PC-3 (cell line): ENCODE measurements at regions of chr16 and their contacts with region 1.

Region 1: GRCh38 chr16:2905431-2906387 is 6.0 kb upstream of the FLYWCH1 start:
- DNase-seq: peak; percentile 97
- ATAC-seq: peak; percentile 76
- H3K4me3 ChIP-seq: peak overlapping the region; percentile 87
- H3K27ac ChIP-seq: no peak overlapping the region
- H3K4me1 ChIP-seq: peaks cover 15% of the 10 kb centered on the region
- H3K27me3 ChIP-seq: no peaks in the 10 kb centered on the region
- CTCF ChIP-seq: no peak

Region 2: GRCh38 chr16:2883027-2883851 is 22.5 kb before region 1 on chr16 and contains the start of gene FLYWCH2:
- CTCF ChIA-PET with region 1: no interaction called
- POLR2A ChIA-PET with region 1: interaction called, 4 read pairs
- intact Hi-C with region 1: loop called (anchors 2 kb)
- DNase-seq: peak; percentile 92
- ATAC-seq: peak; percentile 68
- H3K4me3 ChIP-seq: peak within 1 kb of the TSS; percentile 90
- H3K27ac ChIP-seq: peak within 1 kb of the TSS; percentile 67
- H3K4me1 ChIP-seq: peaks cover 5% of the 10 kb centered on the region; the same call in 1 of the 2 replicates
- H3K27me3 ChIP-seq: no peaks in the 10 kb centered on the region
- CTCF ChIP-seq: no peak
- total RNA-seq, gene FLYWCH2: 92.0 and 100 TPM in 2 replicates

Region 3: GRCh38 chr16:2919511-2920255 is 14.0 kb after region 1 on chr16:
- CTCF ChIA-PET with region 1: interaction called, 3 read pairs
- POLR2A ChIA-PET with region 1: no interaction called
- intact Hi-C with region 1: loop called (anchors 1 kb)
- DNase-seq: peak; percentile 74
- ATAC-seq: no peak
- H3K4me3 ChIP-seq: no peak overlapping the region
- H3K27ac ChIP-seq: no peak overlapping the region
- H3K4me1 ChIP-seq: peaks cover 11% of the 10 kb centered on the region
- H3K27me3 ChIP-seq: no peaks in the 10 kb centered on the region
- CTCF ChIP-seq: peak; percentile 85

Region 4: DNA sequence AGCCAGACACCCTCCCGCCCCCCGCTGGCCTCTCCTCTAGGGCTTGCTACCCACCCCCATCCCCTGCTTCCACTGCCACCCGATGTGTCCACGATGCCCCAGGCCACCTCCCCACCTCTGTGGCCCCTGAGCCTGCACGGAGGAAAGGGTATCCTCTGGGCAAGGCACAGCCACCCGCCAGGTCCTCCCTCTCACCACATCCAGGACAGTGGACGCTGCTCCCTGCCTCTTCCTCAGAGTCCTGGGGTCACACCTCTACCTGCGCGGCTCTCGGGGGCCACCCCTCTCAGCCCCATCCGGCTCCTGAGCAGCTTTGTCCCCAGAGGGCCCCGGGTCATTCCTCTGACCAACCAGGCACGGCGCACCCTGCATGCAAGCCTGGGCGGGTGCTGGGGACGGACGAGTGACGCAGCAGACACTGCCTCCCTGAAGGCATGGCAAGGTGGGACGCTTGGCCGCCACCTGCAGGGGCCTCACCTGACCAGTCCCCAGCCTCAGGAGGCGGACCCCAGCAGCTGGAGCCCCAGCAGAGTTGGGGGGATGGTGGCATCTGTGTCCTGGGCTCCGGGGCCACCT is 30.8 kb after region 1 on chr16:
- CTCF ChIA-PET with region 1: no interaction called
- POLR2A ChIA-PET with region 1: no interaction called
- intact Hi-C with region 1: no loop called
- DNase-seq: no peak
- ATAC-seq: no peak
- H3K4me3 ChIP-seq: no peak overlapping the region
- H3K27ac ChIP-seq: no peak overlapping the region
- H3K4me1 ChIP-seq: no peaks in the 10 kb centered on the region
- H3K27me3 ChIP-seq: no peaks in the 10 kb centered on the region
- CTCF ChIP-seq: no peak

Region 5: DNA sequence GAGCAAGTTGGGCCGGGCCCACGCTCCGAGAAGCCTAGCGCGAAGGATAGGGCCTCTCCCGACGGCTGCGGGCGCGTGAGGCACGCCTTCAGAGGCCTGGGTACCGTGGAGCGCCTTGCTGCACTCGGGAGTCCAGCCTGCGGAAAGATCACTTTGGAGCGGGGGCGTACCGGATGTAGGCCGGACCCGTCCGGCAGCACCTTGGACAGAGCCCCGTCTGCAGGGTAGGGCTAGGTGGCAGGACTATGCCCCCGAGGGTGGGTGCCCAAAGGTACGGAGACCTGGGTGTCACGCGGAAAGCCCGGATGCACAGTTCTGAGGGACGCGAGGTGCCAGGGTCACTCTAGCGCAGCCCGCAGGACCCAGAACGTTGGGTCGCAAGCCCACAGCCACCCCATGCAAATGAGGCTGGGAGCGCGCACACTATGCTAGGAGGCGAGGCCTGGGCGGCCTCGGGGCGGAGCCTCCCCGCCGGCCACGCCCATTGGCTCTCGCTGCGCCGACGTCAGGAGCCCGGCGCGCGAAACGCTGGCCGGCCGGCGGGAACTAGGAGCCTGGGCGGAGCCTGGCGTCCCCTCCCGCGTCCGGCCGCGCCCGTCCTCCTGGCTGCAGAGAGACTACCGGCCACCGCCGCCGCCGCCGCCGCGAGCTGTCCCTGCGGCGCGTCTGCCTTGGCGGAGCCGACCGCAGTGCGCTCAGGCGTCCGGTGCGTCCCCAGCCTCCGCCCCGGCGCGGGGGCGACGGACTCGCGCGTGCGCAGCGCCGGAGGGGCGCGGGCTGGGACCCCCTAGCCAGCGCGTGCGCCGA is 63.2 kb after region 1 on chr16 and contains the start of gene PAQR4:
- CTCF ChIA-PET with region 1: no interaction called
- POLR2A ChIA-PET with region 1: no interaction called
- intact Hi-C with region 1: loop called (anchors 10 kb)
- DNase-seq: peak; percentile 92
- ATAC-seq: peak; percentile 72
- H3K4me3 ChIP-seq: peak within 1 kb of the TSS; percentile 85
- H3K27ac ChIP-seq: peak within 1 kb of the TSS; percentile 43
- H3K4me1 ChIP-seq: peaks cover 22% of the 10 kb centered on the region; the same call in 1 of the 2 replicates
- H3K27me3 ChIP-seq: no peaks in the 10 kb centered on the region
- CTCF ChIP-seq: no peak
- total RNA-seq, gene PAQR4: 37.9 and 45.0 TPM in 2 replicates

Region 6: GRCh38 chr16:3198334-3199072 is 292.8 kb after region 1 on chr16:
- CTCF ChIA-PET with region 1: no interaction called
- POLR2A ChIA-PET with region 1: no interaction called
- intact Hi-C with region 1: no loop called
- DNase-seq: no peak
- ATAC-seq: no peak
- H3K4me3 ChIP-seq: no peak overlapping the region
- H3K27ac ChIP-seq: no peak overlapping the region
- H3K4me1 ChIP-seq: no peaks in the 10 kb centered on the region
- H3K27me3 ChIP-seq: no peaks in the 10 kb centered on the region
- CTCF ChIP-seq: no peak